ENCODE measurements at regions of chr6 and their contacts with region 1.

Region 1: GRCh38 chr6:112043032-112044007 is 10.6 kb upstream of the CCN6 start:
- DNase-seq: peak; percentile 85 to 91
- H3K4me3 ChIP-seq: peak overlapping the region; percentile 51 to 62
- H3K27ac ChIP-seq: peak overlapping the region; percentile 52 to 69
- H3K4me1 ChIP-seq: peaks cover under 1 to 30% (median 11%) of the 10 kb centered on the region in 4 donors
- H3K27me3 ChIP-seq: no peaks in the 10 kb centered on the region
- CTCF ChIP-seq: peak; percentile 93 to 96

Region 2: GRCh38 chr6:111483736-111484632 is 559.3 kb before region 1 on chr6:
- intact Hi-C with region 1: no loop called
- DNase-seq: peak; percentile 99
- H3K4me3 ChIP-seq: peak overlapping the region; percentile 62 to 99
- H3K27ac ChIP-seq: peak overlapping the region; percentile 97 to 100
- H3K4me1 ChIP-seq: peaks cover 0 to 55% (median 14%) of the 10 kb centered on the region in 4 donors
- H3K27me3 ChIP-seq: no peaks in the 10 kb centered on the region
- CTCF ChIP-seq: no peak

Region 3: GRCh38 chr6:111541026-111541681 is 502.2 kb before region 1 on chr6:
- intact Hi-C with region 1: no loop called
- DNase-seq: no peak
- H3K4me3 ChIP-seq: no peak overlapping the region
- H3K27ac ChIP-seq: no peak overlapping the region
- H3K4me1 ChIP-seq: peaks cover 0 to 39% (median 12%) of the 10 kb centered on the region in 4 donors
- H3K27me3 ChIP-seq: no peaks in the 10 kb centered on the region
- CTCF ChIP-seq: no peak

Region 4: DNA sequence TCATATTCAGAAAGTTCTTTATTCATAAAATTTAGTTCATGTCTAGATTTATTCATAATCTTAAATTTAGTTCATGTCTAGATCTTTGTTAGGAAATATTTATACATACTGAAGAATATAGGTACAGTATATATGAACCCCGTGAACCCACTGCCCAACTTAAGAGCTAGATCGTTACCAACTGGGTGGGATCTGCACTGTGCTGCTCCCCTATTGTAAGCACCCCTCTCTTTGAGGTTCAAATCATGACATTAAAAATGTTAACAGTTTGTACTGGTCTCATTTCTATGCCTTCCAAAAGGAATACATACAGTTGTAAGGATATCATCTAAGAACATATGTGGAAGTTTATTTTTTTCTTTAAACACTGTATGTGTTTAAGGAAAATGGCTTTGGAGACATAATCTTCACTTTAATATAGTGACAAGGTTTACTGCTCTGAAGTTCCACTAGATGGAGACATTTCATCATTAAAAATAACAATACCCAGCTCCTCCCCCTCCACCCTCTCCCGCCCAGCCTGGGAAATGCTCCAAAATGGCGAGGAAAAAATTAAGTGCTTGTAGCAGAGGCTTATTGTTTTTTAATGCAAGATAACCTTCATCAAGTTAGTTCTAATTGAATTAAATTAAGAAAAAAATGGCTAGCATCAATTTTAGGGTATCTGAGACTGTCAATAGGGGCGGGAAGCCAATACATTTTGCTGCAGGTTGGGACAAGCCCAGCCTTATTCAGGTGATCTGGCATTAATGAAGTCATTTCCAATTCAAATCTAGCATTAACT is 333.5 kb before region 1 on chr6:
- intact Hi-C with region 1: loop called (anchors 2 kb)
- DNase-seq: peak; percentile 68 to 82
- H3K4me3 ChIP-seq: no peak overlapping the region
- H3K27ac ChIP-seq: no peak overlapping the region
- H3K4me1 ChIP-seq: peaks cover 0 to 9% (median 2%) of the 10 kb centered on the region in 4 donors
- H3K27me3 ChIP-seq: no peaks in the 10 kb centered on the region
- CTCF ChIP-seq: peak; percentile 68 to 88

Region 5: GRCh38 chr6:111873178-111874024 is 169.9 kb before region 1 on chr6 and contains the start of gene FYN:
- intact Hi-C with region 1: loop called (anchors 5 kb)
- DNase-seq: peak; percentile 98
- H3K4me3 ChIP-seq: peak within 1 kb of the TSS; percentile 67 to 80
- H3K27ac ChIP-seq: peak within 1 kb of the TSS; percentile 65 to 69
- H3K4me1 ChIP-seq: peaks cover 0 to 20% (median 12%) of the 10 kb centered on the region in 4 donors
- H3K27me3 ChIP-seq: peaks cover 0 to 6% of the 10 kb centered on the region in 2 donors
- CTCF ChIP-seq: peak; percentile 49 to 63

Region 6: DNA sequence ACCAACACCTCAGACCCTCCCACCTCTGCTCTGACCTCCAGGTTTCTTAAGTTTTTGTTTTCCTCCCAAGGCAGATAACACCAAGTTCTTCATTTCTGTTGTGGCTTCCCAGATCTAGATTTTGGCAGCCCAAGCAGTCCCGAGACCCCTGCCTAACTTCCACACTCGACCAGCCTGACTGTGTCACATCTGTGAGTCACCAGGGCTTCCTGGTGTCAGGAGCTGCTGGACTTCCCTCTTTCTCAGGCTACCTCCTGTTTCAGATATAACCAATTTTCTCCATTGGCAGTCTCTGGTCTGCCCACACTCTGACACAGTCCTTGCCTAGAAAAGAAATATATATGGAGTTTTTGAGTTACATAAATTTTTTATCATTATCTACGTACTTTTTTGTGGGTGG is 35.5 kb before region 1 on chr6:
- intact Hi-C with region 1: loop called (anchors 5 kb)
- DNase-seq: peak in 1 of 2 donors; percentile 62
- H3K4me3 ChIP-seq: no peak overlapping the region
- H3K27ac ChIP-seq: no peak overlapping the region
- H3K4me1 ChIP-seq: peaks cover 0 to 13% (median 4%) of the 10 kb centered on the region in 4 donors
- H3K27me3 ChIP-seq: no peaks in the 10 kb centered on the region
- CTCF ChIP-seq: no peak

Region 7: DNA sequence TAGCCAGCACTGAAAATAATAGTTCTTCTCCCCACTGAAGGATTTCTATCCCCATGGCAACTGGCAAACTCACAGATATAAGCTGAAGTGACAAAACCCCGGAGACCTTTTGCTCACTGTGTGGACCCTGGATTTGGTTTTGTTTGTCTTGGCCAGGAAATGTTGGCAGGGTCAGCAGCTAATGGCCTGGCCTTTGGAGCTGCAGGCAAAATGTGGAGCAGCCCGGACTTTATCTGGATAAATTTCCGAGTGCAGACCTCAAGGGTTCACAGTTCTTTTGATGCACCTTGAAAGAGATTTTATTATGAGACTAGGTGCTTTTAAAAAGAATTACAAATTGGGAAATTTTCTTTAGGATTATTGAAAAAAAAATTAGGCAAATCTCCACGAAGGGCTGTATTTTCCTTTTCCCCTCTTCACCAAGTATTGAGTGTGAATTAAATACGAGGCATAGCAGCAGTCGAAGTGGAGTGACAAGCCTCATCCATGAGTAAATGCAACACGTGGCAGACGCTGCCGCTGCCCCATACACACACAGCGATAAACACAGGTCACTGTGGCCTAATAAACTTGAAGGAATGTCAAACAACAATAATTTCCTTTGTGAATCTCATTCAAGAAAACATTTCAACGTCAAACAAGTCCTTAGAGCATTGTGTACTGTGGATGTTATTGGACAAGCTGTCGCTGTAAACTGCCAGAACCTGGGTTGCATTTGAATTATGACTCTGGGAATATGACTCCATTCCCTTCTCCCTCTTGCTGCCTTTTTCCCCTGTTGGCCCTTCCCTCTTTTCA is 24.5 kb before region 1 on chr6:
- intact Hi-C with region 1: no loop called
- DNase-seq: peak; percentile 76 to 83
- H3K4me3 ChIP-seq: no peak overlapping the region
- H3K27ac ChIP-seq: peak overlapping the region; percentile 55 to 58
- H3K4me1 ChIP-seq: peaks cover 0 to 66% (median 33%) of the 10 kb centered on the region in 4 donors
- H3K27me3 ChIP-seq: no peaks in the 10 kb centered on the region
- CTCF ChIP-seq: no peak

Measured in tibial artery (tissue), 4 donors.